GM12878 (cell line): ENCODE measurements at regions of chr19 and their contacts with region 1.

Region 1: DNA sequence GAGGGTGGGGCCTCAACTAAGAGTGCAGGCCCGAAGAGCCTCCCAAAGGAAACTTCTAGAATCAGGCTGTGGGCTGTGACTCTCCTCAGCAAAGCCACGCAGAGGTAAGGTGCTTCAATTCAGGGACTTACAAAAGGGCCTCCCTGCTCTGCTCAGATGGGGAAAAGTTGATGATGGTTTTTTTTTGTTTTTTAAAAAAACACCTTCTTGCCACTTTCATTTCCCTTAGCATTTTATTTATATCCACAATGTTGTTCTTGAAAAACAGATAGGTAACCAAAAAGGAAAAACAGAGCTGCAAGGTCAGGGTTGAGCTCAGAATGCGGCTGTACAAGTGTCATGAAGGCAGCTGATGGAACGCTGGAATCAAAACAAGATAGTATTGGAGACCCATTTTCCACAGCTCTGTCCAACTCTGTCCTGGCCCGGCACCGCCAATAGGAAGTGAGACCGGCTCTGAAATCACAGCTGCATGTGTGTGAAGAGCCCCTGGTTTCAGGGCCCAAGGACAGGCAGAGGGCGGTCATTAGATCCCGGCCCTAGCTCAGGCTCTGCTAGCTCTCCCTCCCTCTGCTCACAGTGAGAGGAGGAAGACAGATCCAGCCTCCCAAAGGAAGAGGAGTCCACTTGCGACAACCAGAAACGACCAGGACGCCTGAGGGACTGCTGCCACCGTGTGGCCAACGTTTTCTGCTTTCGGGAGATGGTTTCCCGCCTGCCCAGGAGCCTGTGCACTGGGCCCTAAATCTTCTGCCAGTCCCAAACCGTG is 58.3 kb downstream of the KLF2 start:
- DNase-seq: no peak
- ATAC-seq: peak; percentile 85
- H3K4me3 ChIP-seq: no peak overlapping the region
- H3K27ac ChIP-seq: peak overlapping the region; percentile 60
- H3K4me1 ChIP-seq: peaks cover 25% of the 10 kb centered on the region
- H3K27me3 ChIP-seq: no peaks in the 10 kb centered on the region
- CTCF ChIP-seq: peak; percentile 75 to 88 (median 80)
- EP300 ChIP-seq: no peak
- POLR2A ChIP-seq: peak; percentile 37; the same call in 1 of the 2 replicates
- RAD21 ChIP-seq: peak; percentile 85

Region 2: GRCh38 chr19:16041299-16041990 is 341.5 kb before region 1 on chr19:
- CTCF ChIA-PET with region 1: interaction called, 13 read pairs
- POLR2A ChIA-PET with region 1: interaction called, 3 read pairs
- RAD21 ChIA-PET with region 1: interaction called, 6 read pairs
- SMC1A ChIA-PET with region 1: interaction called, 6 read pairs
- in situ Hi-C with region 1: no loop called
- intact Hi-C with region 1: no loop called
- DNase-seq: no peak
- ATAC-seq: peak; percentile 91
- H3K4me3 ChIP-seq: no peak overlapping the region
- H3K27ac ChIP-seq: no peak overlapping the region
- H3K4me1 ChIP-seq: no peaks in the 10 kb centered on the region
- H3K27me3 ChIP-seq: no peaks in the 10 kb centered on the region
- CTCF ChIP-seq: peak; percentile 92 to 93 (median 92)
- EP300 ChIP-seq: no peak
- POLR2A ChIP-seq: no peak
- RAD21 ChIP-seq: peak; percentile 88

Region 3: GRCh38 chr19:16247353-16248182 is 135.4 kb before region 1 on chr19:
- CTCF ChIA-PET with region 1: interaction called, 192 read pairs
- POLR2A ChIA-PET with region 1: interaction called, 4 read pairs
- RAD21 ChIA-PET with region 1: interaction called, 81 read pairs
- SMC1A ChIA-PET with region 1: interaction called, 78 read pairs
- in situ Hi-C with region 1: loop called (anchors 5 kb)
- intact Hi-C with region 1: loop called (anchors 1 kb)
- DNase-seq: peak; percentile 28
- ATAC-seq: peak; percentile 99
- H3K4me3 ChIP-seq: no peak overlapping the region
- H3K27ac ChIP-seq: no peak overlapping the region
- H3K4me1 ChIP-seq: peaks cover 2% of the 10 kb centered on the region; the same call in 1 of the 2 replicates
- H3K27me3 ChIP-seq: no peaks in the 10 kb centered on the region
- CTCF ChIP-seq: peak; percentile 93 to 98 (median 97)
- EP300 ChIP-seq: no peak
- POLR2A ChIP-seq: no peak
- RAD21 ChIP-seq: peak; percentile 98

Region 4: GRCh38 chr19:16330368-16330801 is 52.6 kb before region 1 on chr19:
- CTCF ChIA-PET with region 1: interaction called, 27 read pairs
- POLR2A ChIA-PET with region 1: interaction called, 3 read pairs
- RAD21 ChIA-PET with region 1: interaction called, 26 read pairs
- SMC1A ChIA-PET with region 1: interaction called, 38 read pairs
- in situ Hi-C with region 1: no loop called
- intact Hi-C with region 1: no loop called
- DNase-seq: no peak
- ATAC-seq: peak; percentile 78
- H3K4me3 ChIP-seq: no peak overlapping the region
- H3K27ac ChIP-seq: no peak overlapping the region
- H3K4me1 ChIP-seq: peaks cover 33% of the 10 kb centered on the region
- H3K27me3 ChIP-seq: no peaks in the 10 kb centered on the region
- CTCF ChIP-seq: no peak
- EP300 ChIP-seq: no peak
- POLR2A ChIP-seq: peak; percentile 46; the same call in 1 of the 2 replicates
- RAD21 ChIP-seq: no peak

Region 5: GRCh38 chr19:16371540-16371986 is 11.4 kb before region 1 on chr19:
- CTCF ChIA-PET with region 1: interaction called, 26 read pairs
- POLR2A ChIA-PET with region 1: interaction called, 9 read pairs
- RAD21 ChIA-PET with region 1: interaction called, 28 read pairs
- SMC1A ChIA-PET with region 1: interaction called, 30 read pairs
- in situ Hi-C with region 1: no loop called
- intact Hi-C with region 1: no loop called
- DNase-seq: peak; percentile 79
- ATAC-seq: peak; percentile 86
- H3K4me3 ChIP-seq: peak overlapping the region; percentile 3; the same call in 1 of the 2 replicates
- H3K27ac ChIP-seq: peak overlapping the region; percentile 81
- H3K4me1 ChIP-seq: peaks cover 62% of the 10 kb centered on the region
- H3K27me3 ChIP-seq: no peaks in the 10 kb centered on the region
- CTCF ChIP-seq: no peak
- EP300 ChIP-seq: peak; percentile 49 to 97; a peak in 3 of 4 replicates
- POLR2A ChIP-seq: peak; percentile 55
- RAD21 ChIP-seq: no peak